MCF 10A (cell line): ENCODE measurements at regions of chr2 and their contacts with region 1.

Region 1: GRCh38 chr2:241149925-241150659 is at the start of gene PPP1R7:
- DNase-seq: peak; percentile 94
- H3K4me3 Mint-ChIP-seq: peak within 1 kb of the TSS; percentile 95
- H3K27ac Mint-ChIP-seq: peak within 1 kb of the TSS; percentile 79
- H3K4me1 Mint-ChIP-seq: peaks cover 30% of the 10 kb centered on the region
- H3K27me3 Mint-ChIP-seq: no peaks in the 10 kb centered on the region
- CTCF ChIP-seq: no peak
- total RNA-seq, gene PPP1R7: 38.9 and 43.9 TPM in 2 replicates

Region 2: DNA sequence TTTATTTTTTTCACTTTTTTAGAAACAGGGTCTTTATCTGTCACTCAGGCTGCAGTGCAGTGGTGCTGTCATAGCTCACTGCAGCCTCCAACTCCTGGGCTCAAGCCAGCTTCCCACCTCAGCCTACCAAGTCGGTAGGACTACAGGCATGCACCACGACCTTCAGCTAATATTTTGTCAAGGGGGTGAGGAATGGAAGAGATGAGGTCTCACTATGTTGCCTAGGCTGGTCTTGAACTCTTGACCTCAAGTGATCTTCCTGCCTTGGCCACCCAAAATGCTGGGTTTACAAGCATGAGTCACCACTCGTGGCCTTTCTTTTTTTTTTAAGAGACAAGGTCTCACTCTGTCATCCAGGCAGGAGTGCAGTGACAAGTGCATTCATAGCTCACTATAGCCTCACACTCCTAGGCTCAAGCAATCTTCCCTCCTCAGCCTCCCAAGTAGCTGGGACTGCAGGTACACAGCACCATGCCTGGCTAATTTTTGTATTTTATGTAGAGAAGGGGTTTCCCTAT is 13.6 kb after region 1 on chr2:
- CTCF ChIA-PET with region 1: no interaction called
- POLR2A ChIA-PET with region 1: interaction called, 13 read pairs
- intact Hi-C with region 1: no loop called
- DNase-seq: no peak
- H3K4me3 Mint-ChIP-seq: no peak overlapping the region
- H3K27ac Mint-ChIP-seq: no peak overlapping the region
- H3K4me1 Mint-ChIP-seq: no peaks in the 10 kb centered on the region
- H3K27me3 Mint-ChIP-seq: no peaks in the 10 kb centered on the region
- CTCF ChIP-seq: no peak